Left ventricle myocardium inferior (tissue), 1 donor: ENCODE measurements at regions of chr17 and their contacts with region 1.

Region 1: GRCh38 chr17:66152756-66153155 is 39.2 kb downstream of the CEP112 start:
- DNase-seq: no peak
- H3K4me3 ChIP-seq: no peak overlapping the region
- H3K27ac ChIP-seq: no peak overlapping the region
- H3K4me1 ChIP-seq: no peaks in the 10 kb centered on the region
- H3K27me3 ChIP-seq: no peaks in the 10 kb centered on the region
- CTCF ChIP-seq: no peak

Region 2: DNA sequence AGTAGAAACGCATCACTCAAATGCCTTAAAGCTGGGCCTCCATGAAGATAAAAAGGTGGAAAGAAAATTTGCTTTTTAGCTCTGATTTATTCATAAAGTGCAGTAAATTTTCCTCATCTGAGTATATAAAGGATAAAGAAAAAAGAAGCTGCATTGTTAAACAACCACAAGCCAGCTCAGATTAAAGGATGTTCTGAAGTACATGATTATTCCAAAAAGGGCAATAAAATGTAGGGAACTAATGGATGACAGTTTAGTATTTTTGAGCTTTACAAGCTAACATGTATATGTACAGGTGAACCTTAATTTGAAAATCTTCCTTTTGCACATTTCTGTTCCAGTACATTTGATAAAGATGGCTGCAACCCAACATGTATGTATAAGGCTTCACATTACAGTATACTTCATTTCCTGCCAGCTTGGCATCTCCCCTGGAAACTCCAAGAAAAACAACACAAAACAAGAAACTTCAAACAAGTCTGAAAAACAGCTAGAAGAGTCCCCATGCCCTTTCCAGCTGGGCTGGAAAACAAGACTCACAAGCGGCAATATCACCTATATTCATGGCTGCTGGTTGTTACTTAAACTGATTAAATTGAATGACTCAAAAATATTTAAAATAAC is 186.6 kb before region 1 on chr17:
- intact Hi-C with region 1: loop called (anchors 10 kb)
- DNase-seq: no peak
- H3K4me3 ChIP-seq: no peak overlapping the region
- H3K27ac ChIP-seq: no peak overlapping the region
- H3K4me1 ChIP-seq: no peaks in the 10 kb centered on the region
- H3K27me3 ChIP-seq: no peaks in the 10 kb centered on the region
- CTCF ChIP-seq: no peak